GM12878 (cell line): ENCODE measurements at regions of chr10 and their contacts with region 1.

Region 1: DNA sequence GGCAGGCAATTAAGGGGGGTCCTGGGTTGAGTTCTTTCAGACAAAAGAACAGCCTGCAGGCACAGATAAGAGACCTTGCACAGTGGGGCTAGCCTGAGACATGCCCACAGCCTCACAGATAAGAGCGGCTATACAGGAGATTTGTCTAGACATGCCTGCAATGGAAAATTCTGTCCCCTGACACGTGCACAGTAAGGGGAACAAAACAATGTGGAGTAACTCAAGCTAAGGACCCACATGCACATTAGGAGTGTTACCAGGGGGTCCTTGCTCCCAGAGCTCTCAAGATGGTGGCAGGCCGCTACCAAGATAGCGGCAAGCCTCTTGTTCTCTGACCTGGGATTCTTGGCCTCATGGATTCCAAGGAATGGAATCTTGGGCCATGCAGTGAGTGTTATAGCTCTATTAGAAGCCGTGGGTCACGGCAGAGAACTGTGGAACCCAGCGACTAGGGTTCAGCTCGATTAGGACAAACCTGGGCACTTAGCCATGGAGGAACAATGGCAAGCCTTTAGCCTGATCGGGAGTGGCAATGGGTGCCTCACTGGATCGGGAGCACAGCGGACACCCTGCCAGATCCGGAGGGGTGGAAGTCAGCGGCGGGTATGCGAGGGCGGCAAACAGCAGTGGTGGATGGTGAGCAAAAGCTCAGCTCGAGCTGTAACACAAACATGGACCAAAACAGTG is 196.9 kb downstream of the CCSER2 start:
- DNase-seq: no peak
- ATAC-seq: no peak
- H3K4me3 ChIP-seq: no peak overlapping the region
- H3K27ac ChIP-seq: no peak overlapping the region
- H3K4me1 ChIP-seq: no peaks in the 10 kb centered on the region
- H3K27me3 ChIP-seq: no peaks in the 10 kb centered on the region
- CTCF ChIP-seq: no peak
- EP300 ChIP-seq: no peak
- POLR2A ChIP-seq: no peak
- RAD21 ChIP-seq: no peak

Region 2: GRCh38 chr10:84563868-84564267 is 38.6 kb after region 1 on chr10:
- CTCF ChIA-PET with region 1: no interaction called
- POLR2A ChIA-PET with region 1: no interaction called
- RAD21 ChIA-PET with region 1: no interaction called
- SMC1A ChIA-PET with region 1: no interaction called
- in situ Hi-C with region 1: no loop called
- intact Hi-C with region 1: no loop called
- DNase-seq: peak; percentile 4
- ATAC-seq: peak; percentile 78
- H3K4me3 ChIP-seq: no peak overlapping the region
- H3K27ac ChIP-seq: no peak overlapping the region
- H3K4me1 ChIP-seq: peaks cover 3% of the 10 kb centered on the region; the same call in 1 of the 2 replicates
- H3K27me3 ChIP-seq: no peaks in the 10 kb centered on the region; a peak in 1 of 4 replicates
- CTCF ChIP-seq: no peak
- EP300 ChIP-seq: no peak
- POLR2A ChIP-seq: no peak
- RAD21 ChIP-seq: no peak

Region 3: GRCh38 chr10:84706875-84707274 is 181.6 kb after region 1 on chr10:
- CTCF ChIA-PET with region 1: no interaction called
- POLR2A ChIA-PET with region 1: no interaction called
- RAD21 ChIA-PET with region 1: no interaction called
- SMC1A ChIA-PET with region 1: no interaction called
- in situ Hi-C with region 1: no loop called
- intact Hi-C with region 1: no loop called
- DNase-seq: no peak
- ATAC-seq: no peak
- H3K4me3 ChIP-seq: no peak overlapping the region
- H3K27ac ChIP-seq: no peak overlapping the region
- H3K4me1 ChIP-seq: no peaks in the 10 kb centered on the region
- H3K27me3 ChIP-seq: peaks cover 0 to 4% of the 10 kb centered on the region in 2 experiments; a peak in 2 of 4 replicates
- CTCF ChIP-seq: no peak
- EP300 ChIP-seq: no peak
- POLR2A ChIP-seq: no peak
- RAD21 ChIP-seq: no peak

Region 4: GRCh38 chr10:86130737-86131475 is 1605.6 kb after region 1 on chr10:
- CTCF ChIA-PET with region 1: no interaction called
- POLR2A ChIA-PET with region 1: no interaction called
- RAD21 ChIA-PET with region 1: no interaction called
- SMC1A ChIA-PET with region 1: no interaction called
- in situ Hi-C with region 1: no loop called
- intact Hi-C with region 1: loop called (anchors 5 kb)
- DNase-seq: no peak
- ATAC-seq: no peak
- H3K4me3 ChIP-seq: no peak overlapping the region
- H3K27ac ChIP-seq: no peak overlapping the region
- H3K4me1 ChIP-seq: no peaks in the 10 kb centered on the region
- H3K27me3 ChIP-seq: no peaks in the 10 kb centered on the region; a peak in 1 of 4 replicates
- CTCF ChIP-seq: no peak
- EP300 ChIP-seq: no peak
- POLR2A ChIP-seq: no peak
- RAD21 ChIP-seq: no peak